HepG2 (cell line): ENCODE measurements at regions of chr4 and their contacts with region 1.

Region 1: GRCh38 chr4:2262143-2262943 is 434 bp upstream of the MXD4 start:
- DNase-seq: peak; percentile 97
- ATAC-seq: peak; percentile 91
- H3K4me3 ChIP-seq: peak overlapping the region; percentile 50 to 76 (median 71); a peak in 5 of 6 replicates
- H3K27ac ChIP-seq: peak overlapping the region; percentile 83
- H3K4me1 ChIP-seq: peaks cover 31% of the 10 kb centered on the region
- H3K27me3 ChIP-seq: peaks cover 11 to 28% of the 10 kb centered on the region in 2 experiments; a peak in 3 of 5 replicates
- CTCF ChIP-seq: no peak
- EP300 ChIP-seq: peak in 1 of 2 experiments; percentile 69; a peak in 2 of 4 replicates
- POLR2A ChIP-seq: peak in 1 of 2 experiments; percentile 61; a peak in 2 of 4 replicates
- RAD21 ChIP-seq: peak; percentile 23; the same call in 1 of the 2 replicates

Region 2: GRCh38 chr4:1763550-1764080 is 498.7 kb before region 1 on chr4:
- CTCF ChIA-PET with region 1: no interaction called
- POLR2A ChIA-PET with region 1: no interaction called
- in situ Hi-C with region 1: no loop called
- intact Hi-C with region 1: no loop called
- DNase-seq: peak; percentile 73
- ATAC-seq: peak; percentile 14
- H3K4me3 ChIP-seq: peak overlapping the region; percentile 61 to 79 (median 74)
- H3K27ac ChIP-seq: peak overlapping the region; percentile 75
- H3K4me1 ChIP-seq: peaks cover 79% of the 10 kb centered on the region
- H3K27me3 ChIP-seq: no peaks in the 10 kb centered on the region
- CTCF ChIP-seq: no peak; the same call in 1 of the 2 replicates
- EP300 ChIP-seq: no peak
- POLR2A ChIP-seq: no peak
- RAD21 ChIP-seq: peak; percentile 44; the same call in 1 of the 2 replicates

Region 3: DNA sequence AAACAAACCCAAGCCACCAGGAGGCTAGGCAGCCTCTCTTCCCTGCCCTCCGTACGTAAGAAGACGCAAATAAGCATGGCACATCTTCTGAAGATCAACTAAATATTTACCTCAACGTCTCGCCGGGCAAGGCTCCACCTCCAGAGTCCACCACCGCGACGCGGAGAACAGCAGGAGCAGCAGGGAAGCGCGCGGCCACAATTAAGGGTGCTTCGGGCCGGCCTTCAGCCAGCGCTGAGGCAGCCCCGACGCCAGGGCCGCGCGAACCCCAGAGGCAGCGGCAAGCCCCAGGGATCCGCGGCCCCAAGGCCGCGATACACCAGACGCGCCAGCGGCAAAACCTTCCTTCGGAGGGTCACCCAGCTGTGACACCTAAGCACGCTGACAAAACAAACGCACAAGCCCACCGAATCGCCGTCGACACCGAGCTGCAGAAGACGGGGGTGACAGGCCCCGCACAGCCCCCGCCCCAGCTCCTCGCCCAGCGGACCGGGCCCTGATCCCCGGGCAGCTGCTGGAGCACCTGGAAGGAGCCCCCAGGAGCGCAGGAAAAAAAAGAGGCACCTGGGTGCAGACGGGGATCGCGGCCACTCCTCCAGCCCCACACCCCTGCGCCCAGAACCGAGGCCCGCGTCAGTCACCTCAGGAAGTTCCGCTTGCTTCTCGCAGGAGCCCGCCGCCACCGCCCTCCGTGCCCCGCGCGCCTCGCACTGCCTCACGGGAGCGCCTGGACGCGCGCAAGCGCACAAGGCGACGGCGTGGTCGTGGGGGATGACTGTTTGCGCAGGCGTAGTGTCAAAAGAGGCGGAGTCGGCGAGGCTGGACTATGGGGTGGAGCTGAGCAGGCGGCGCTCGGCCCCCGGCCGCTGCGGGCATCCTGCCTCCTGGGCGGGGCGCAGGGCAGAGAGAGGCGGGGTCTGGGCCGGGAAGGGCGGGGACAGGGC is 20.7 kb before region 1 on chr4 and contains the starts of genes HAUS3 and POLN:
- CTCF ChIA-PET with region 1: no interaction called
- POLR2A ChIA-PET with region 1: interaction called, 11 read pairs
- in situ Hi-C with region 1: no loop called
- intact Hi-C with region 1: loop called (anchors 1 kb)
- DNase-seq: peak; percentile 90
- ATAC-seq: peak; percentile 87
- H3K4me3 ChIP-seq: peak within 1 kb of the TSS; percentile 67 to 93 (median 76)
- H3K27ac ChIP-seq: peak within 1 kb of the TSS; percentile 77
- H3K4me1 ChIP-seq: peaks cover 70% of the 10 kb centered on the region
- H3K27me3 ChIP-seq: no peaks in the 10 kb centered on the region
- CTCF ChIP-seq: no peak; the same call in 1 of the 2 replicates
- EP300 ChIP-seq: no peak
- POLR2A ChIP-seq: peak in 1 of 2 experiments; percentile 55; a peak in 1 of 4 replicates
- RAD21 ChIP-seq: no peak
- total RNA-seq, gene HAUS3: 12.6 and 16.3 TPM in 2 replicates
- total RNA-seq, gene POLN: 0.60 and 0.93 TPM in 2 replicates

Region 4: DNA sequence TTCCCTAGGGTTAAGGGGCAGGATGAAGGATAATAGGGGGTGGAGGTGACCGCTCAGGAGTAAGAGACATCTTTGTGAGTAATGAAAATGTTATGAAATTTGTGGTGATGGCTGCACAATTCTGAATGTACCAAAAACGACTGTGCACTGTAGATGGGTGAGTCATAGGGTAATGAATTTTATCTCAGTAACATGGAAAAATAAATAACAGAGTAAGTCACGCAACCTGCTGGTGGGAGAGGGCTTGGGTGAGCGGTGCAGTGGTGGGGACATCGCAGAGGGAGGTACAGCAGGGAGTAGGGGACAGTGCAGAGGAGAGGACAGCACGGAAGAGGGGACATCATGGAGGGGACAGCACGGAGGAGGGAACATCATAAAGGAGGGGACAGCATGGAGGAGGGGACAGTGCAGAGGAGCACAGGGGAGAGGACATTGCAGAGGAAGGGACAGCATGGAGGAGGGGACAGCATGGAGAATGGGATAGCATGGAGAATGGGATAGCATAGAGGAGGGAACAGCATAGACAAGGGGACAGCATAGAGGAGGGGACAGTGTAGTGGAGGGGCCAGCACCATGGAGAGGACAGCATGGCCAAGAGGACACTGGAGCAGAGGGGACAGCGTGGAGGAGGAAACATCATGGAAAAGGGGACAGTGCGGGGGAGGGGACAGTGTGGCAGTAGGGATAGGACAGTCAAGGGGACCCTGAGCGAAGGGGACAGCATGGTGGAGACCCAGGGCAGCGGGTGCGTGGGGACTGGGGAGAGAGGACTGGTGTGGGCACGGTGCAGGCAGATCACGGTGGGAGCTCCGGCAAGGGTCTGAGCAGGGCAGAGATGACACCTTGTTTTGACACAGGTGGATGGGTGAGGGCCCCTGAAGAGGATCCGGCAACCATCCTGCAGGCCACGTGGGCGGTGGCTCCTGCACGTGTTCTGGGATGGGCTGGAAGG is 68.0 kb after region 1 on chr4:
- CTCF ChIA-PET with region 1: no interaction called
- POLR2A ChIA-PET with region 1: no interaction called
- in situ Hi-C with region 1: no loop called
- intact Hi-C with region 1: no loop called
- DNase-seq: no peak
- ATAC-seq: no peak
- H3K4me3 ChIP-seq: no peak overlapping the region
- H3K27ac ChIP-seq: no peak overlapping the region
- H3K4me1 ChIP-seq: no peaks in the 10 kb centered on the region
- H3K27me3 ChIP-seq: peaks cover 0 to 6% of the 10 kb centered on the region in 2 experiments; a peak in 4 of 5 replicates
- CTCF ChIP-seq: no peak
- EP300 ChIP-seq: no peak
- POLR2A ChIP-seq: no peak
- RAD21 ChIP-seq: no peak